ENCODE measurements at regions of chr16 and their contacts with region 1.

Region 1: DNA sequence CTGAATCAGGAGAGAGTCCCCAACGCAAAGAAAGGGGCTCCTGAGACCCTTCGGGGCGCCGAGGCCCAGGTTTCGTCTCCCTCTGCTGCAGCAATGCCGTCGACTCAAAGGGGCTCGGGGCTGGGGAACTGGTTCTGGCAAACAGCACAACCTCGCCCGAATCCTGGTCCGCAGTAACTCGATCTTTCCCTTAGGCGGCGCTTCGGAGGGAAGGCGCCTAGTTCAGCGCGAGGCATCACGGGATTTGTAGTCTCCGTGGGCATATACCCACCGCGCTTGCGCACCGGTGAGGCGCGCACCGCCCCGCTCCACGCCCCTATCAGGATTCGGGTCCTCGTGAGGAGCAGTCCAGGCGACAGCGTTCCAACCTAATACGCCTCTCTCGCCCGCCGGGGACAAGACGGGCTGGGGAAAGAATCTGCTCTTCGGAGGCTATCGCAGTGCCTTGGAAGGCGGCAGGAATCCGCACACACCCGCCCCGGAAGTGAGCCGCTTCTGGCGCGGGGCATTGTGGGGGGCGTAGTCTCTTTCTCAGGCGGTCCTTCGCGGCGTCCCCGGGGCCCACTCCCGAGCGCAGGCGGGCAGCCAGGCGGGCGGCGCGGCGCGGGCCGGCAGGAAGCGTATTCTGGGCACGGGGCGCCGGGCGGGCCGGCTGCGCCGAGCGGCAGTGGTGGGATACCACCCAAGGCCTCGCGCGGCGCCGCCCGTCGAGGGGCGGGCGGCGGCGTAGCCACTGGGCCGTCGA is at the start of gene THAP11:
- DNase-seq: peak; percentile 86 to 99 (median 94)

Region 2: DNA sequence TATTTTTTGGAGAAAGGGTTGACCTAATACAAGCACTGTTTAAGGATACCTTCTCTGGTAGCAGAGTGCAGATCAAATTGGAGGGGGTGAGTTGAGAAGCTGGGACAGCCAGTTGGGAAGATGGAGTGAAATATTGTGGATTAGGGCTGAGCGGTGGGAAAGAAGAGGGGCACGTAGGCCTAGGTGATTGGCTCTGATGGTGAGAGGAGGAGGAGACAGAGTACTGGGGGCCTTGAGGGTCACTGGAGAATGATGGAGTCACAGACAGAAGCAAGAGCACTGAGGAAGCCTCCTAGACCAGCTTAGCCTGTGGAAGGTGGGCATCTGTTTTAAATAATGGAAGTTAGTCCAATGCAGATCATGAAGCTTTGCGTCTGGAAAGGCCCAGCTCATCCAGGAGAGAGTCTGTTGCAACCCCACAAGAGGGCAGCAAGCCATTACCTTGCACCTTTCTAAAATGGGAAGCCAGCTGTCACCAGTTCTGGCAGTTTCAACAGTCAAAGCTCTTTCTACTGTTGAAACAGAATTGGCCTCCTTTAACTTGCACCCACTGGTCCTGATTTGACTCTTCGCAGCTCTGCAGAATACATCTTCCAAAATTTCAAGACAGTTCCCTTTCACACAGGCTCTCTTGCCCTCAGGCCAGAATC is 581.4 kb before region 1 on chr16:
- intact Hi-C with region 1: no loop called
- DNase-seq: peak in 4 of 10 donors; percentile 17 to 83 (median 66)

Region 3: GRCh38 chr16:67521095-67521804 is 320.7 kb before region 1 on chr16:
- intact Hi-C with region 1: loop called (anchors 10 kb)
- DNase-seq: peak; percentile 86 to 99 (median 96)

Region 4: DNA sequence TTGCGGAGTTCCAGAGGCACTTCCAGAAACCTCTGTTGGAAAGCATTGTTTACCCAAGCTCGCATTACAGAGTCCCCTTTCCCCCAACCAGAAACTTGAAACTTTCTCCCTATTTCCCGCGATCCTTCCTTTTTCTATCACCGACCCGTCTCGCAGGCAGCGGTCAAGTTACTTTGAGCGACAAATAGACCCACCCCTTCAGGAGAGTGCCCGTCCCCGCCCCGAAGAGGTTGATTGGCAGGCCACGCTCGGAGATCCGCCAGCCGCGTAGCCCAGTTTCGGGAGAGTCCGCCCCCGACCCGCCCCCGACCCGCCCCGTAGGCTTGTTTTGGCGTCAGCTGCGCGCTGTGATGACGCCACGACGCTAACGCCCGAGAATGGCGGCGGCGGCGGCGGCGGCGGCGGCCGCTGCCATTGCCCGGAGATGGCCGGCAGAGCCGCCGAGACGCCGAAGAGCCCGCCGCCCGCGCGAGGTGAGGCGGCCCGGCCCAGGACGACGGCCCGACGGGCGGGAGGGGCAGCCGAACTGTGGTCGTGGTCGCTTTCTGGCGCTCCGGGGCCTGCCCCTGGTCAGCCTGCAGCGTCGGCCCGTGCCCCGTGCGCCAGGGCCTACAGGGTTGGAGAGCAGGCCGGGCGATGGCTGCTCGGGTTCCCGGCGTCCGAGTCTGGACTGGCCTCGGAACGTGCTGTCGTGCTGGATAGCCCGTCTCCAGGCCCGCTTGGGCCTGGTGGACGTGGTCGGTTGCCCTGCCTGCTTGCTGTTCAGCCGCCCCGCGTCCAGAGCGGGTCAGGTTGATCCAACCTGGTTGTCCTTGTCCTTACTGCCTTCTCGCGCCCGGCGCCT is 51.2 kb after region 1 on chr16 and contains the start of gene PSKH1:
- intact Hi-C with region 1: loop called (anchors 10 kb)
- DNase-seq: peak; percentile 93 to 100 (median 98)

Region 5: DNA sequence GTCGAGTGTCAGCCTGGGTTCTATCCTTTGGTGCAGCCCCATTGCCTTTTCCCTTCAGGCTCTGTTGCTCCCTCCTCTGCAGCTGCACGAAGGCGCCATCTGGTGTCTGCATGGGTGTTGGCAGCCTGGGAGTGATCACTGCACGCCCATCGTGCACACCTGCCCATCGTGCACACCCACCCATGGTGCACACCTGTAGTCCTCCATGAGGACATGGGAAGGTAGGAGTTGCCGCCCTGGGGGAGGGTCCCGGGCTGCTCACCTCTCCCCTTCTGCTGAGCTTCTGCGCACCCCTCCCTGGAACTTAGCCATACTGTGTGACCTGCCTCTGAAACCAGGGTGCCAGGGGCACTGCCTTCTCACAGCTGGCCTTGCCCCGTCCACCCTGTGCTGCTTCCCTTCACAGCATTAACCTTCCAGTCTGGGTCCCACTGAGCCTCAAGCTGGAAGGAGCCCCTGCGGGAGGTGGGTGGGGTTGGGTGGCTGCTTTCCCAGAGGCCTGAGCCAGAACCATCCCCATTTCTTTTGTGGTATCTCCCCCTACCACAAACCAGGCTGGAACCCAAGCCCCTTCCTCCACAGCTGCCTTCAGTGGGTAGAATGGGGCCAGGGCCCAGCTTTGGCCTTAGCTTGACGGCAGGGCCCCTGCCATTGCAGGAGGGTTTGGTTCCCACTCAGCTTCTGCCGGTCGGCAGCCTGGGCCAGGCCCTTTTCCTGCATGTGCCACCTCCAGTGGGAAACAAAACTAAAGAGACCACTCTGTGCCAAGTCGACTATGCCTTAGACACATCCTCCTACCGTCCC is 86.8 kb after region 1 on chr16:
- intact Hi-C with region 1: loop called (anchors 5 kb)
- DNase-seq: peak; percentile 69 to 97 (median 84)

Measured in posterior cingulate gyrus (tissue), 11 donors.